ENCODE measurements at regions of chr7 and their contacts with region 1.

Region 1: GRCh38 chr7:80637911-80638765 is at the start of gene CD36:
- DNase-seq: no peak
- ATAC-seq: peak in 3 of 4 donors; percentile 20 to 36 (median 31)
- H3K4me3 ChIP-seq: peak within 1 kb of the TSS; percentile 57
- H3K27ac ChIP-seq: peak within 1 kb of the TSS; percentile 92
- H3K4me1 ChIP-seq: peaks cover 46% of the 10 kb centered on the region
- H3K27me3 ChIP-seq: no peaks in the 10 kb centered on the region
- CTCF ChIP-seq: no peak
- total RNA-seq, gene CD36: 149 to 662 (median 240) TPM

Region 2: GRCh38 chr7:80604436-80604835 is 33.7 kb before region 1 on chr7:
- intact Hi-C with region 1: loop called (anchors 5 kb)
- DNase-seq: no peak
- ATAC-seq: peak; percentile 60 to 85 (median 78)
- H3K4me3 ChIP-seq: peak overlapping the region; percentile 54
- H3K27ac ChIP-seq: peak overlapping the region; percentile 87
- H3K4me1 ChIP-seq: peaks cover 49% of the 10 kb centered on the region
- H3K27me3 ChIP-seq: no peaks in the 10 kb centered on the region
- CTCF ChIP-seq: no peak

Region 3: GRCh38 chr7:80611775-80612174 is 26.4 kb before region 1 on chr7:
- intact Hi-C with region 1: loop called in 1 of 2 experiments (anchors 2 kb)
- DNase-seq: peak; percentile 38 to 50
- ATAC-seq: peak; percentile 40 to 67 (median 57)
- H3K4me3 ChIP-seq: peak overlapping the region; percentile 40
- H3K27ac ChIP-seq: peak overlapping the region; percentile 87
- H3K4me1 ChIP-seq: peaks cover 91% of the 10 kb centered on the region
- H3K27me3 ChIP-seq: no peaks in the 10 kb centered on the region
- CTCF ChIP-seq: no peak

Measured in psoas muscle (tissue), 8 donors.